ENCODE measurements at regions of chr4 and their contacts with region 1.

Region 1: DNA sequence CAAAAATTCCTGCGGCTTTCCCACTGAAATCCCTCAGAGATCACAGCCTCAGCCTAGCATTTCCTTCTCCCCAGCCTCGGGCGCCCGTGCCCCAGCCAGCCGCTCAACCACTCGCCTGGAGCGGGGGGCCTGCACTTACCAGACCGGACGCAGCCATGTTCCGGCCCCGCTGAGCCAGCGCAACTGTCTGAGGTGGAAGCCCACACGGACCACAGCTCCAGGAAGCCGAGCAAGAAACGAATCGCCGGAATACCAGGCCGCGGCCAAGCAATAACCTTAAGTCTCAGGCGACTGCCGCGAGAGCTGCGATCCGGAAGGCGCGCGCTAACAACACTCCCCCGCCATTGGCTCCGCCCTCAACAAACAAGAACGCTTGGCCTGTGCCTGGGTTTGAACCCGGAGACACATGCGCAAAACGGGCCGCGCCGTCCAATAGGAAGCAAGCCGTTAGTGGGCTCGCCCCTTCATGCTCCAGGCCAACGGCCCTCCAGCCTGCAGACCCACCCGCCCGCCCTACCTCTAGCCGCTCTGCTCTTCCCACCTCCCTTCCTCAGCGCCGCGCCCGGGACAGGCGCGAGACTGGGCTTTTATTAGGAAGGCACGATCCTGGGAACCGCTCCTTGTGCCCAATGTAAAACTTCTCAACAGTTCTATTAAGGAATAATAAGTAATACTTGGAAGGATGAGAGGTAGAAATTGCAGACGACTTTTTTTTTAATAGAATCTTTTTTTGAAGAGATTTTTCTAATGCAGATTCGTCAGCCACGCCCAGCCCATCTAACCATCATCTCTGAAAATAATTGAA is at the start of gene CENPC:
- DNase-seq: peak; percentile 92 to 99 (median 94)
- ATAC-seq: peak; percentile 96
- H3K4me3 ChIP-seq: peak within 1 kb of the TSS; percentile 88
- H3K27ac ChIP-seq: peak within 1 kb of the TSS; percentile 97
- H3K4me1 ChIP-seq: peaks cover 0 to 14% of the 10 kb centered on the region in 2 experiments; a peak in 2 of 5 replicates
- H3K27me3 ChIP-seq: no peaks in the 10 kb centered on the region
- CTCF ChIP-seq: no peak
- EP300 ChIP-seq: peak; percentile 11; the same call in 1 of the 2 replicates
- POLR2A ChIP-seq: peak; percentile 97
- RAD21 ChIP-seq: no peak
- polyA plus RNA-seq, gene CENPC: 18.1 TPM

Region 2: DNA sequence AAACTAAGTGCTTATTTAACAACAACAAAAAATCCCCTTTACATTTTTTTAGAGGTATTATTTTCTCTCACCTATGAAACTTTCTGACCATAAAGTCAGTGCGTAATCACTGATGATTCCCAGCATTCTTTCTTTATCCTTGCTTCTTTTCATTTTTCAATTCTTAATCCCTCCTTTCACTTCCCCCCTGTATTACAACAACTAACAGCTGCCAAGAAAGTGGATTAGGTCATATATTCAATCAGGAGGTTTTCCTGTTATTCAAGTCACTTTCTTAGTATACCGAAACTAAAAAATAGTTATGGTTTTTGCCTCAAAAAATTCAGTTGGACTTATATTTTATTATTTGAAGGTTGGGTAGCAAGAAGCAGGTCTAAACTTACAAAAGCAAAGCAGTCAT is 11.0 kb after region 1 on chr4:
- CTCF ChIA-PET with region 1: no interaction called
- POLR2A ChIA-PET with region 1: interaction called, 15 read pairs
- in situ Hi-C with region 1: no loop called
- intact Hi-C with region 1: no loop called
- DNase-seq: no peak
- ATAC-seq: no peak
- H3K4me3 ChIP-seq: no peak overlapping the region
- H3K27ac ChIP-seq: no peak overlapping the region
- H3K4me1 ChIP-seq: peaks cover 6 to 13% of the 10 kb centered on the region in 2 experiments; a peak in 4 of 5 replicates
- H3K27me3 ChIP-seq: no peaks in the 10 kb centered on the region
- CTCF ChIP-seq: no peak
- EP300 ChIP-seq: no peak
- POLR2A ChIP-seq: no peak
- RAD21 ChIP-seq: no peak

Region 3: GRCh38 chr4:67624939-67625338 is 79.5 kb after region 1 on chr4:
- CTCF ChIA-PET with region 1: no interaction called
- POLR2A ChIA-PET with region 1: no interaction called
- in situ Hi-C with region 1: no loop called
- intact Hi-C with region 1: loop called (anchors 5 kb)
- DNase-seq: no peak
- ATAC-seq: no peak
- H3K4me3 ChIP-seq: no peak overlapping the region
- H3K27ac ChIP-seq: no peak overlapping the region
- H3K4me1 ChIP-seq: no peaks in the 10 kb centered on the region
- H3K27me3 ChIP-seq: no peaks in the 10 kb centered on the region
- CTCF ChIP-seq: no peak; a peak in 1 of 6 replicates
- EP300 ChIP-seq: no peak
- POLR2A ChIP-seq: no peak
- RAD21 ChIP-seq: no peak

Region 4: DNA sequence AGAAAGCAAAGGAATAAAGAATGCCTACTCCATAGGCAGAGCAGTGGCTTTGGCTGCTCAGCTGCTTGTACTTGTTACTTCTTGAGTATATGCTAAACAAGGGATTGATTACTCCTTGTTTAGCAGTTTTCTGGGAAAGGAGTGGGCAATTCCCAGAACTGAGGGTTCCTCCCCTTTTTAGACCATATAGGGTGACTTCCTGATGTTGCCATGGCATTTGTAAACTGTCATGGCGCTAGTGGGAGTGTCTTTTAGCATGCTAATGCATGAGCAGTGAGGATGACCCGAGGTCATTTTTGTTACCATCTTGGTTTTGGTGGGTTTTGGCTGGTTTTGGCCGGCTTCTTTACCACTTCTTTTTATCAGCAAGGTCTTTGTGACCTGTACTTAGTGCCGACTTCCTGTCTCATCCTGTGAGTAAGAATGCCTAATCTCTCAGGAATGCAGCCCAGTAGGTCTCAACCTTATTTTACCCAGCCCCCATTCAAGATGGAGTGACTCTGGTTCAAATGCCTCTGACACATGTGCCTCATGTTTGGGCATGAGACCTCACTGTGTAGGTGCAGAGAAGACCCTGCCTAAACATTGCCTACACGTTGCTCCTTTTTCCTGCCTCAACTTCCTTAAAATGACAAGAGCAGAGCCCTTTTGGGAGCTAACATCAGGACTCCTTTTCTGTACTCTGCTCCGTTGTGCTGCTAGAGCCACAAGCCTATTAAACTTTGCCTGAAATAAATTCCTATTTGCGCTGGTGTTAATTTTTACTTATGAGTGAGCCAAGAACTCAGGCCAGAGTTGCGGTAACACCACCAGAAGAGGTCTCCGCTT is 176.6 kb after region 1 on chr4:
- CTCF ChIA-PET with region 1: no interaction called
- POLR2A ChIA-PET with region 1: interaction called, 5 read pairs
- in situ Hi-C with region 1: no loop called
- intact Hi-C with region 1: loop called (anchors 5 kb)
- DNase-seq: peak in 2 of 4 experiments; percentile 55 to 91
- ATAC-seq: peak; percentile 86
- H3K4me3 ChIP-seq: peak overlapping the region; percentile 28; the same call in 1 of the 2 replicates
- H3K27ac ChIP-seq: peak overlapping the region; percentile 99
- H3K4me1 ChIP-seq: peaks cover 19 to 52% of the 10 kb centered on the region in 2 experiments
- H3K27me3 ChIP-seq: no peaks in the 10 kb centered on the region
- CTCF ChIP-seq: no peak
- EP300 ChIP-seq: peak; percentile 81; the same call in 1 of the 2 replicates
- POLR2A ChIP-seq: peak; percentile 75
- RAD21 ChIP-seq: peak in 1 of 2 experiments; percentile 66; a peak in 2 of 4 replicates

Region 5: GRCh38 chr4:68349649-68350360 is 804.4 kb after region 1 on chr4 and contains the start of gene YTHDC1:
- CTCF ChIA-PET with region 1: no interaction called
- POLR2A ChIA-PET with region 1: no interaction called
- in situ Hi-C with region 1: no loop called
- intact Hi-C with region 1: loop called (anchors 10 kb)
- DNase-seq: peak; percentile 89 to 97 (median 90)
- ATAC-seq: peak; percentile 95
- H3K4me3 ChIP-seq: peak within 1 kb of the TSS; percentile 91
- H3K27ac ChIP-seq: peak within 1 kb of the TSS; percentile 98
- H3K4me1 ChIP-seq: peaks cover 8 to 9% of the 10 kb centered on the region in 2 experiments; a peak in 4 of 5 replicates
- H3K27me3 ChIP-seq: no peaks in the 10 kb centered on the region; a peak in 1 of 5 replicates
- CTCF ChIP-seq: no peak; a peak in 1 of 6 replicates
- EP300 ChIP-seq: no peak
- POLR2A ChIP-seq: peak; percentile 96
- RAD21 ChIP-seq: 0 out of 4 replicates have a peak, but pooled peaks of 1 of the 2 experiments have one; percentile 11
- polyA plus RNA-seq, gene YTHDC1: 9.8 to 15.8 TPM